ENCODE measurements at regions of chr17 and their contacts with region 1.

Region 1: DNA sequence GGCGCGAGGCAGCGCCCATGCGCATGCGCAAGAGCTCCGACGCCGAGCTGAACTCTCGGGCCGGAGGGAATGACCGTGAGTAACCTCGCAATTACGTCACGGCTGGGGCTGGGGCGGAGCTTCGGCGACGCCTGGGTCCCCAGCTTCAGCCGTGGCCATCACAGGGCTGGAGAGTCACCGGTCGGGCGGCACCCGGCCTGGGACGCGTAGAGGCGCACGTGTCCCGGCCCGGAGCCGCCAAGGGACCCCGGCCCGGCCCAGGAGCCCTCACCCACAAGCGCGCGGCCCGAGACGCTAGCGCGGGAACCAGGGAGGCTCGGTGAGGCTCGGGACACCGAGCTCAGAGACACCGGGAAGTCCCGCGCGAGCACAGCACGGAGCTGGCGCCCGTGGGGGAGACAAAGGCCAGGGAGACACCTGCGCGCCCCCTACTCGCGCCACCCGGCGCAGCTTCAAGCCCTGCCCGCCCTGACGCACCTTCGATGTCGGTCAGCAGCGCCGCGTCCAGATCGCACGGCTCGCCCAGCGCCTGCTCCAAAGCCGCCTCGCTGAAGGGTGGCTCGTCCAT is 452 bp downstream of the SREBF1 start:
- DNase-seq: peak; percentile 98
- ATAC-seq: peak; percentile 73
- H3K4me3 Mint-ChIP-seq: peak overlapping the region; percentile 96
- H3K27ac Mint-ChIP-seq: peak overlapping the region; percentile 93
- H3K4me1 Mint-ChIP-seq: peaks cover 76% of the 10 kb centered on the region
- H3K27me3 Mint-ChIP-seq: no peaks in the 10 kb centered on the region

Region 2: DNA sequence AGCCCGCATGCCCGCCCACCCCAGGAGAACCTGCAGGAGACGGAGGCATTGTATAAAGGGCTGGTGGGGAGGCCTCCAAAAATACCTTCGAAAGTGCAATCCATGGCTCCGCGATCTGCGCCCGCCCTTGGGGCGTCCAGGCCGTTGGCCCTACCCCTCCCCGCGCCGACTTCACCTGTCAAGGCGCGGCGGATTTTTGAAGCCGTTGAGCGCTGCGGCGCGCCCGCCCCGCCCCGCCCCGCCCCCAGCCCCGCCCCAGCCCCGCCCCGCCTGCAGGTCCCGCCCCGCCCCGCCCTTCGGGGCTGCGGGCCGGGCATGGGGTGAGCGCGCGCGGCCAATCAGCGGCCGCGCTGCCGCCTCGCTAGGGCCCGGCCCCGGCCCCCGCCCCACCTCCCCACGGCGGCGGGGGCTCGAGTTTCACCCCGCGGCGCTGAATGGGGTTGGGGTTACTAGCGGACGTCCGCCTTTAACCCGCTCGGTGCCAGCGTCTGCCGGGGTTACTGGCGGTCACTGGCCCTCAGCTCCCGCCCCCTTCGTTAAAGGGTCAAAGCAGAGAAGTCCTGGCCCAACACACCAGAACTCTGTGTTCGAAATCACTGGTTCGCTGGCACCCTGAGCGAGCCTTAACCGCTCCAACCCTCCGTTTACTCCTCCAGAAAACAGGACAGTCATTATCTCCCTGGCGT is 12.8 kb before region 1 on chr17:
- CTCF ChIA-PET with region 1: interaction called, 6 read pairs
- POLR2A ChIA-PET with region 1: interaction called, 76 read pairs
- DNase-seq: peak; percentile 90
- ATAC-seq: peak; percentile 84
- H3K4me3 Mint-ChIP-seq: peak overlapping the region; percentile 83
- H3K27ac Mint-ChIP-seq: peak overlapping the region; percentile 91
- H3K4me1 Mint-ChIP-seq: peaks cover 92% of the 10 kb centered on the region
- H3K27me3 Mint-ChIP-seq: no peaks in the 10 kb centered on the region

Region 3: GRCh38 chr17:17849845-17850373 is 13.6 kb after region 1 on chr17:
- CTCF ChIA-PET with region 1: interaction called, 33 read pairs
- POLR2A ChIA-PET with region 1: interaction called, 117 read pairs
- DNase-seq: peak; percentile 91
- ATAC-seq: peak; percentile 66
- H3K4me3 Mint-ChIP-seq: peak overlapping the region; percentile 50
- H3K27ac Mint-ChIP-seq: peak overlapping the region; percentile 92
- H3K4me1 Mint-ChIP-seq: peaks cover 84% of the 10 kb centered on the region
- H3K27me3 Mint-ChIP-seq: no peaks in the 10 kb centered on the region

Region 4: GRCh38 chr17:17919169-17920107 is 83.1 kb after region 1 on chr17:
- CTCF ChIA-PET with region 1: no interaction called
- POLR2A ChIA-PET with region 1: no interaction called
- DNase-seq: peak; percentile 79
- ATAC-seq: peak; percentile 92
- H3K4me3 Mint-ChIP-seq: no peak overlapping the region
- H3K27ac Mint-ChIP-seq: no peak overlapping the region
- H3K4me1 Mint-ChIP-seq: peaks cover 26% of the 10 kb centered on the region
- H3K27me3 Mint-ChIP-seq: no peaks in the 10 kb centered on the region

Measured in activated CD8-positive, alpha-beta T cell treated with anti-CD3 and anti-CD28 coated beads, Interleukin-2, amount 10 ng/mL, durations not matched to agents 7 days and 5 days (primary cell).